Endothelial cell of umbilical vein (primary cell): ENCODE measurements at regions of chr22 and their contacts with region 1.

Region 1: GRCh38 chr22:29625090-29625825 is 21.8 kb downstream of the NF2 start:
- DNase-seq: peak; percentile 78
- H3K4me3 ChIP-seq: no peak overlapping the region
- H3K27ac ChIP-seq: peak overlapping the region; percentile 98
- H3K4me1 ChIP-seq: peaks cover 80% of the 10 kb centered on the region
- H3K27me3 ChIP-seq: no peaks in the 10 kb centered on the region
- CTCF ChIP-seq: peak; percentile 78 to 89
- POLR2A ChIP-seq: no peak

Region 2: GRCh38 chr22:28741758-28742561 is 883.3 kb before region 1 on chr22 and contains the starts of genes CHEK2 and HSCB:
- CTCF ChIA-PET with region 1: no interaction called
- POLR2A ChIA-PET with region 1: no interaction called
- dilution Hi-C with region 1: no loop called
- intact Hi-C with region 1: loop called (anchors 10 kb)
- DNase-seq: peak; percentile 99
- H3K4me3 ChIP-seq: peak within 1 kb of the TSS; percentile 75 to 87 (median 77)
- H3K27ac ChIP-seq: peak within 1 kb of the TSS; percentile 84
- H3K4me1 ChIP-seq: peaks cover 12% of the 10 kb centered on the region
- H3K27me3 ChIP-seq: no peaks in the 10 kb centered on the region
- CTCF ChIP-seq: peak in 1 of 2 donors; percentile 11
- POLR2A ChIP-seq: no peak
- total RNA-seq, gene CHEK2: 24.6 and 27.4 TPM in 2 replicates
- total RNA-seq, gene HSCB: 14.1 and 20.3 TPM in 2 replicates

Region 3: DNA sequence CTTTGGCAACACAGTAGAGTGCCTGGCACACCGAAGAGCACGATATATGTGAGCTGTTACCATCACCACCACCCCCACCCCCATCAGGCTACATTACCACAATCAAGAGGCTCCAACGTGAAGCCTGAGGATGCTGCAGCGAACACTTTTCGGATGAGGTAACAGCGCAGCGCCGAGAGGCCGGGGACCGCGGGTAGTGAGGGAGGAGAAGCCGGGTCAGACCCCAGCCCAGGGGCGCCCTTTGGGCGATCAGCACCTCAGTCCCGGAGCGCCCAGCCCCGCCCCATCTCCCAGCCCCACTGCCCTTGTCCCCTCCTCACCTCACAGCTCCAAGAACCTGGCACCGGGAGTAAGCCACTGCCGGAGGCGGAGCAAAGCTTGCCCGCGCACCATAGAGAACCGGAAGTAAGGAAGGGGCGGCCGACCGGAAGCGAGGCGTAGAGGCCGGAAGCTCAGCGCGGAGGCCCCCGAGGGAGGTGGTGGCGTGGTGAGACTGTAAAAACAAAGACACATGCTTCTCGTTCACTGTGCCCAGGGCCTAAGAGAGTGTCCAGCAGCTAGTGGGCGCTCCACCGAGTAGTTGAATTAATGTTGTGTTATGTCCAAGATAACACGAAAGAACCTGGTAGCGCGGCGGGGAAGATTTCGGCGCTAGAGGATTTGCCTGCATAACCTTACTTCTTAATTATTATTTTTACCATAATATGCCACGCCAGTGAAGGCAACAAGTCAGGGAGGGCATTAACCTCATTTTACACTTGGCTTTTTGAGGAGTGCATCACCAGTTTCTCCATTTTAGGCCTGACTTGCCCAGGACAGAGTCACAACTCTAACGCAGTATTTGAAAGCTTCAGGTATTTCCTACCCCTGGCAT is 71.7 kb before region 1 on chr22 and contains the start of gene THOC5:
- CTCF ChIA-PET with region 1: interaction called, 4 read pairs
- POLR2A ChIA-PET with region 1: no interaction called
- dilution Hi-C with region 1: no loop called
- intact Hi-C with region 1: loop called (anchors 1 kb)
- DNase-seq: peak; percentile 97
- H3K4me3 ChIP-seq: peak within 1 kb of the TSS; percentile 43 to 91 (median 47)
- H3K27ac ChIP-seq: peak within 1 kb of the TSS; percentile 67
- H3K4me1 ChIP-seq: peaks cover 8% of the 10 kb centered on the region
- H3K27me3 ChIP-seq: no peaks in the 10 kb centered on the region
- CTCF ChIP-seq: peak; percentile 77 to 81
- POLR2A ChIP-seq: peak; percentile 84
- total RNA-seq, gene THOC5: 73.8 and 82.9 TPM in 2 replicates

Region 4: GRCh38 chr22:29587938-29588699 is 37.1 kb before region 1 on chr22:
- CTCF ChIA-PET with region 1: interaction called, 10 read pairs
- POLR2A ChIA-PET with region 1: interaction called, 5 read pairs
- dilution Hi-C with region 1: no loop called
- intact Hi-C with region 1: loop called (anchors 1 kb)
- DNase-seq: peak; percentile 42
- H3K4me3 ChIP-seq: no peak overlapping the region
- H3K27ac ChIP-seq: no peak overlapping the region
- H3K4me1 ChIP-seq: no peaks in the 10 kb centered on the region
- H3K27me3 ChIP-seq: no peaks in the 10 kb centered on the region
- CTCF ChIP-seq: no peak
- POLR2A ChIP-seq: no peak

Region 5: DNA sequence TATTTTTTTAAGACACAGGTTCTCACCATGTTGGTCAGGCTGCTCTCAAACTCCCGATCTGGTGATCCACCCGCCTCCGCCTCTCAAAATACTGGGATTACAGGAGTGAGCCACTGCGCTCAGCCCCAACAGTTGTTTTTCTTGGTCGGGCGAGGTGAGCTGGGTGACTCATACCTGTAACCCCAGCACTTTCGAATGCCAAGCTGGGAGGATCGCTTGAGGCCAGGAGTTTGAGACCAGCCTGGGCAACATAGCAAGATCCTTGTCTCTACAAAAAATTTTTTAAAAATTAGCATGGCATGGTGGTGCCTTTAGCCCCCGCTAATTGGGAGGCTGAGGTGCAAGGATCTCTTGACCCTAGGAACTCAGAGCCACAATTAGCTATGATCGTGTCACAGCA is 28.9 kb before region 1 on chr22:
- CTCF ChIA-PET with region 1: interaction called, 11 read pairs
- POLR2A ChIA-PET with region 1: no interaction called
- dilution Hi-C with region 1: no loop called
- intact Hi-C with region 1: no loop called
- DNase-seq: no peak
- H3K4me3 ChIP-seq: no peak overlapping the region
- H3K27ac ChIP-seq: no peak overlapping the region
- H3K4me1 ChIP-seq: no peaks in the 10 kb centered on the region
- H3K27me3 ChIP-seq: no peaks in the 10 kb centered on the region
- CTCF ChIP-seq: no peak
- POLR2A ChIP-seq: no peak

Region 6: GRCh38 chr22:29603358-29604075 is 21.7 kb before region 1 on chr22 and contains the start of gene NF2:
- CTCF ChIA-PET with region 1: interaction called, 19 read pairs
- POLR2A ChIA-PET with region 1: interaction called, 8 read pairs
- dilution Hi-C with region 1: no loop called
- intact Hi-C with region 1: loop called (anchors 1 kb)
- DNase-seq: peak; percentile 100
- H3K4me3 ChIP-seq: peak within 1 kb of the TSS; percentile 98 to 99 (median 98)
- H3K27ac ChIP-seq: peak within 1 kb of the TSS; percentile 86
- H3K4me1 ChIP-seq: peaks cover 35% of the 10 kb centered on the region
- H3K27me3 ChIP-seq: no peaks in the 10 kb centered on the region
- CTCF ChIP-seq: no peak
- POLR2A ChIP-seq: peak; percentile 82
- total RNA-seq, gene NF2: 114 and 115 TPM in 2 replicates

Region 7: DNA sequence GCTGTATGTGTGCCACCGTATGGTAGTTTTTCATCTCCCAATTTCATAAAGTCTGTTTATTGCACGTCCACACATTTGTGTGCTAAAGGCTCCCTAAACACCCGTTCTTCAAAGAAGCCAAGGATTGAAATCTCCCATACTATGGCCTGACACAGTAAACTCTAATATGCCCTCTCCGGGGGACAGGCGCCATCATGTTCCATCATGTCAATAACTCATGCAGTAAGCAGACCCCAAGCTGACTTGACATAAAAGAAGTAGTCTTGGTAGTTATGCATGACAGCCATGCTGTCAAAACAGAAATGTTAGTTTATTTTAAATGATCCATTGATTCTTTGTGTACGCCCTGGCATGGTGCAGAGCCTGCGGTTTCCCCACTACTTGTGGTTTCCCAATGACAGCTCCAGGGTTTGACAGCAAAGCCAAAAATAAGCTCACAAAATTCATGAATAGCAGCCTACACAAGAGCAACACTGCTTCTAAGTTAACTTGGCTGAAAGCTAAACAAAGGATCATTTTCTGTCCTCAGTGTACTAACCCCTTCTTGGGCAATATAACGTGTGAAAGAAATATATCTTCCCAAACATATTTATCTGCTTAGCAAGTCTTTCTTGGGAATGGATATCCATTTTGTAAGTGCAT is 38.0 kb after region 1 on chr22:
- CTCF ChIA-PET with region 1: interaction called, 7 read pairs
- POLR2A ChIA-PET with region 1: no interaction called
- dilution Hi-C with region 1: no loop called
- intact Hi-C with region 1: loop called (anchors 5 kb)
- DNase-seq: no peak
- H3K4me3 ChIP-seq: no peak overlapping the region
- H3K27ac ChIP-seq: no peak overlapping the region
- H3K4me1 ChIP-seq: peaks cover 10% of the 10 kb centered on the region
- H3K27me3 ChIP-seq: no peaks in the 10 kb centered on the region
- CTCF ChIP-seq: no peak
- POLR2A ChIP-seq: no peak

Region 8: DNA sequence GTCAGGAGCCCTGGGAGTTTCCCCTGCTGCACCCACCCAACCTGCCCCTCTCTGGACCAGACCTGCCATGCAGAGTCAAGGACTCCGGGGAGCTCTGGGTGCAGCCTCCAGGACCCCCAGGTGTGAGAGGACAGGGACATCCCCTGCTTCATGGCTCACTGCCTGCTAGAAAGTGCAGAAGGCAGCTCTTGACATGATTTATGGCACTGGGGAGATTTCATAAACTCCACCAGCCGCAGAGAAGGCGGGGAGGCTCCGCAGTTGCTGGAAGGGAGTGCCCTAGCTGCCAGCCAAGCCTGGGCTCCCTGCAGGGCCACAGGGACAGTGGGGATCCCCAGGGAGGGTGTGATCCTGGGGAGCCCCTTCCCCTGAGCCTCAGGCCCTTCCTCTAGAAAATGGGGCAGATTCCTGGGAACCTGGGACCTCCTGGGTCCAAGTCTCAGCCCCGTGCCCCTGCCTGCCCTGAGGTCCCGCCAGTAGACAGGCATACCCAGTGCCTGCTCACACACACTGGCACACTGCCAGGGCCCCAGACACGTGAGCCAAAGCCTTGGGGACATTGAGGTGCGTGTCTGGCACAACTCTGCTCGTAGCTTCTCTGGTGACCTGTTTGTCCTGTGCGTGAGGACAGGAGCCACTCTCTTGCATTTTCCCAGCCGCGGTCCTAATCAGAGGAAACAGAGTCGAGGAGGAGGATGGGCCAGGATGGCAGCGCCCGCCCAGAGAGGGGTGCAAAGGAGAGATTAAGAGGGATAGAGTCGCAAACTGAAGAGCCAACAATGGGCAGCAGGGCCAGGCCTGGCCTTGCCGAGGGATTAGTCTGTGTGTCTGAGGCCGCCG is 108.3 kb after region 1 on chr22:
- CTCF ChIA-PET with region 1: no interaction called
- POLR2A ChIA-PET with region 1: no interaction called
- dilution Hi-C with region 1: no loop called
- intact Hi-C with region 1: no loop called
- DNase-seq: no peak
- H3K4me3 ChIP-seq: no peak overlapping the region
- H3K27ac ChIP-seq: no peak overlapping the region
- H3K4me1 ChIP-seq: no peaks in the 10 kb centered on the region
- H3K27me3 ChIP-seq: no peaks in the 10 kb centered on the region
- CTCF ChIP-seq: no peak
- POLR2A ChIP-seq: no peak